Posterior cingulate gyrus (tissue), 11 donors: ENCODE measurements at regions of chr11 and their contacts with region 1.

Region 1: DNA sequence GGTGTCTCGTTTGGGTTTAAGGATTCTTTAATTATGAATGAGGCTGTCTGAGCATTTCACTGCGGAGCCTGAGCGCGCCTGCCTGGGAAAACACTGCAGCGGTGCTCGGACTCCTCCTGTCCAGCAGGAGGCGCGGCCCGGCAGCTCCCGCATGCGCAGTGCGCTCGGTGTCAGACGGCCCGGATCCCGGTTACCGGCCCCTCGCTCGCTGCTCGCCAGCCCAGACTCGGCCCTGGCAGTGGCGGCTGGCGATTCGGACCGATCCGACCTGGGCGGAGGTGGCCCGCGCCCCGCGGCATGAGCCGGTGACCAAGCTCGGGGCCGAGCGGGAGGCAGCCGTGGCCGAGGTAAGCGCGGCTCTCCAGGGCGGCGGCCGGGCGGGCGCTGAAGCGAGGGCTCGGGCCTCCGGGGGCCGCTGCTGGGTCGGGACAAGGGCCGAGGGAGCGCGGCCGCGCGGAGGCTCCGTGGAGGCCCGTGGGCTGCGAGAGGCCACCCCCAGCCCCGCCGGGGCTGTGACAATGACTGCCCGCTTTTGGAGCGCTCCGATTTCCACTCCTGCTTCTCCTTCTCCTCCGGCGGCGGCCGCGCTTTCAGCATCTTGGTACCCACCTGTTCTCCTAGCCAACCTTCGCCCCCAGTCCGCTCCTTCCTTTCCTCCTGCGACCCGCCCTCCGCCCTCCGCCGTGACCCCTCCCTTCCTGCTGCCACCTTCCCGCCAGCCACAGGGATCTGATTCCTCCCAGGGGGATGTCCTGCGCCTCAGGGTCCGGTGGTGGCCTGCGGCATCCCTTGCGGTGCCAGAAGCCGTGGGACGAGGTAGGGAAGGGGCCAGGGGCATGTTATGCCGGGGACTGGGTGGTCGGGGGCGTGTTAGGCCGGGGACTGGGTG is at the start of gene EXT2:
- DNase-seq: peak; percentile 85 to 98 (median 90)

Region 2: DNA sequence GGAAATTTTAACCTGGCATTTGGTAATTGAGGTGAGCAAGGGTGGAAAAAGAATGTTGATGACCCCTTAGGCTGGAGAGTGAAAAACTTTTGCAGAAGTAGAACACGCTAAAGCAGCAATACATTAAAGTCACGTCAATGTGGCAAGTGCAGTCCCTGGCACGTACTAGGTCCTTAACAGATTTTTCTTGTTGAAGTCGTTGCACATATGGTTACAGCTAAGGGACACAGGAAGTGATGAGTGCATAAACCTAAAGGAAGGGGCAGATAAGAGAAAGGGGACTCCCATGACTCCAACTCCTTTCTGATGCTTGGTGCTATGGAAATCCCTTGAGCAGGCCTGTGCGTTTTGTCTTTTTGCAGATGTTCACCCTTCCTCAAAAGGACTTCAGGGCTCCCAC is 28.5 kb before region 1 on chr11:
- intact Hi-C with region 1: no loop called
- DNase-seq: no peak

Region 3: GRCh38 chr11:44110231-44110679 is 14.5 kb after region 1 on chr11:
- intact Hi-C with region 1: loop called (anchors 2 kb)
- DNase-seq: peak in 6 of 10 donors; percentile 17 to 81 (median 47)

Region 4: DNA sequence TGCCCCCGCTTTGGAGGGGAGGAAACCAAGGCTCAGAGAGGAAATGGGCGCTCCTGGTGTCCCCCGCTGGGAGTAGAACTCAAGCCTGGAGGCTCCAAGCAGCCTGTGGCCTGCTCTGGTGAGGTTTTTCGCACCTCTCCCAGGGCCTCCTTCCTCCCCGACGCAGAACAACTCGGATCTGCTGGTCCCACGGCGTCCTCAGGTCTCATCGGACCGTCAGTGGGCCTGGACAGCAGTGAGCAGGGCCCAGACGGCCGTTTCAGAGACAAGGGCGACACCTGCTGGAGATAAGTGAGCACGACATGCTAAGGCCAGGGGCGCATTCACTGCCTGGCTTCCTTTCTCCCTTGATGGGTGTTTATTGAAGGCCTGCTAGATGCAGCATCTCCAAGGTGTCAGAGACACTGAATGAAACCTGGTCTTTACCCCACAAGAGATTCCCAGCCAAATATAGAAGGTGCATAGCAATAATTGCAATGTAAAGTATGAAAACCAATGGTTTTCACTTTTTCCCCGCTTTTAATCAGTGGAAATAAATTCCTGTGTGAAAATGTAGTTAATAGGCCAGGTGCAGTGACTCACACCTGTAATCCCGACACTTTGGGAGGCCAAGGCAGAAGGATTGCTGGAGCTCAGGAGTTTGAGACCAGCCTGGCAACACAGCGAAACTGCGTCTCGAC is 442.8 kb after region 1 on chr11:
- intact Hi-C with region 1: loop called (anchors 1 kb)
- DNase-seq: peak; percentile 64 to 97 (median 84)